K562 (cell line): ENCODE measurements at regions of chr17 and their contacts with region 1.

Region 1: DNA sequence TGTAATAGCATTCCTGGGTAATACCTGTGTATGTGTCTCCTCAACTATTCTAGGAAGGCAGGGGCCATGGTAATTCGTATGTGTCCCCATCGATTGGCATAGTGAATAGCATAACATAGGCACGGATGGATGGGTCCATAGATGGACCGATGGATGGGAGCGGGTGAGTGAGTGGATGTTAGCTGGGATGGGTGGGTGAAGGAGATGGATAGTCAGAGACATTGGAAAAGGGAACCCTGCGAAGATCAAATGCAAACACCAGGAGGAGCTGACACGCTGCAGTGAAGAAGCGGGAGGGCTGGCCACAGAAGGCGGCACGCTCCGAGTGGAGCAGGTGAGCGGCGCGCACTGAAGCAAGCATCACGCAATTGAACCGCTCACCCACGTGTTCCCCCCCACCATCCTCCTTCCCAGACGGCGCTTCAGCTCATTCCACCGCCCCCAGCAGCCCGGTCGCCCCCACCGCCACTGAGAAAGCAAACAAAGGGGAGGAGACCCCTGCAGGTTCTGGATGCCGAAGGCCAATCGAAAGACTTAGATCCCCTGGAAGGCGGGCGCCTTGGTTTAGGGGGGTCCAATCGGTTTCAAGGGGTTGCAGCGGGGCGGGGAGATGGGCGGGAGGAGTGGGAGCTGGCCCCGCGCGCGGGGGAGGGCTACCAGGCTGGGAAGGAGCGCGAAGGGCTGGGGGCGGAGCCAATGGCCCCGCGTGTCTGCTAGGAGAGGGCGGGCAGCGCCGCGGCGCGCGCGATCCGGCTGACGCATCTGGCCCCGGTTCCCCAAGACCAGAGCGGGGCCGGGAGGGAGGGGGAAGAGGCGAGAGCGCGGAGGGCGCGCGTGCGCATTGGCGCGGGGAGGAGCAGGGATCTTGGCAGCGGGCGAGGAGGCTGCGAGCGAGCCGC is at the start of gene ARRB2:
- DNase-seq: peak; percentile 90 to 97 (median 94)
- ATAC-seq: peak; percentile 94
- H3K4me3 ChIP-seq: peak within 1 kb of the TSS; percentile 56
- H3K27ac ChIP-seq: peak within 1 kb of the TSS; percentile 50; the same call in 2 of the 3 replicates
- H3K4me1 ChIP-seq: peaks cover 4 to 22% of the 10 kb centered on the region in 2 experiments; a peak in 4 of 5 replicates
- H3K27me3 ChIP-seq: no peaks in the 10 kb centered on the region
- CTCF ChIP-seq: peak; percentile 68 to 84 (median 81)
- EP300 ChIP-seq: 0 out of 2 replicates have a peak, but pooled peaks have one; percentile 4
- POLR2A ChIP-seq: no peak
- RAD21 ChIP-seq: peak; percentile 80 to 86
- polyA plus RNA-seq, gene ARRB2: 0.79 to 0.80 TPM

Region 2: DNA sequence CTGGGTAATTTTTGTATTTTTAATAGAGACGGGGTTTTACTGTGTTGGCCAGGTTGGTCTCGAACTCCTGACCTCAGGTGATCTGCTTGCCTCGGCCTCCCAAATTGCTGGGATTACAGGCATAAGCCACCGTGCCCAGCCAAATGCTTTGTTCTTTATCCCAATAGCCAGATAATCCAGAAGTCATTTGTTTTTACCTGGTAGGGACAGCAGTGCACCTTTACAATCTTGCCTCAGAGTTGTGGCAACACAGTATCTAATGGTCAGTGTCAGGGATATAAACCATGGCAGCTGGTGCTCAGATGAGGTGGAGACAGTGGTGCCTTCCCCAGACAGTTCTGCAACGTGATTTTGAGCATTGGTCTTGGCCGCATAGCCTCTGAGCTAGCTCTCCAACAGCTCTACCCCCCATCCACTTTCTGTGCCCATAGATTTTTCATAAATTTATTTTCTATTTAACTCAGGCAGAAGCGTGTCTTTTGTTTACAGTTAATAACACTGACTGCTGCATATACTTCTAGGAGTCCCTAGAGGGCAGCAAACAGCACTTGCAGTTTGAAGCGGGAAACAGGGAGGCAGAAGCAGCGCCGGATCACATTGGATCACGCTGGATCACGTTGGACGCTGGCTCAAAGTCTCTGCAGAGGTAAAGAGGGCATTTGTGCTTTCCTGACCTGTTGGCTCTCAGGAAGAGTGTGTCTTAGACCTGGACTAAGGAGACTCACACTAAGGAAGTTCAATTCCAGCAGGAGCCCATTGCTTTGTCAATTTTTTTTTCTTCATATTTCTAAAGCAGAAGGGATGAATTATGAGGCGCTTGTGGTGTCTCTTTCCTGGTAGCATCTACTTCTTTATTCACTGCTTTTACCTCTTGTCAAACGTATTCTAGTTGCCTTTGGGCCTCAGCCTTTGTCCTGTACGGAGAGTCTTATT is 144.6 kb before region 1 on chr17:
- CTCF ChIA-PET with region 1: no interaction called
- POLR2A ChIA-PET with region 1: no interaction called
- in situ Hi-C with region 1: no loop called
- intact Hi-C with region 1: loop called (anchors 10 kb)
- DNase-seq: peak; percentile 42 to 80 (median 52)
- ATAC-seq: peak; percentile 89
- H3K4me3 ChIP-seq: no peak overlapping the region
- H3K27ac ChIP-seq: no peak overlapping the region
- H3K4me1 ChIP-seq: peaks cover 0 to 2% of the 10 kb centered on the region in 2 experiments; a peak in 2 of 5 replicates
- H3K27me3 ChIP-seq: peaks cover 0 to 4% of the 10 kb centered on the region in 2 experiments; a peak in 2 of 5 replicates
- CTCF ChIP-seq: peak; percentile 79 to 81 (median 79)
- EP300 ChIP-seq: no peak
- POLR2A ChIP-seq: no peak
- RAD21 ChIP-seq: peak in 1 of 2 experiments; percentile 34; a peak in 2 of 4 replicates

Region 3: GRCh38 chr17:4690745-4691144 is 19.3 kb before region 1 on chr17:
- CTCF ChIA-PET with region 1: no interaction called
- POLR2A ChIA-PET with region 1: no interaction called
- in situ Hi-C with region 1: no loop called
- intact Hi-C with region 1: no loop called
- DNase-seq: no peak
- ATAC-seq: no peak
- H3K4me3 ChIP-seq: no peak overlapping the region
- H3K27ac ChIP-seq: no peak overlapping the region
- H3K4me1 ChIP-seq: no peaks in the 10 kb centered on the region
- H3K27me3 ChIP-seq: no peaks in the 10 kb centered on the region
- CTCF ChIP-seq: no peak
- EP300 ChIP-seq: no peak
- POLR2A ChIP-seq: no peak
- RAD21 ChIP-seq: no peak

Region 4: GRCh38 chr17:4733073-4733531 is 23.1 kb after region 1 on chr17:
- CTCF ChIA-PET with region 1: interaction called, 12 read pairs
- POLR2A ChIA-PET with region 1: no interaction called
- in situ Hi-C with region 1: no loop called
- intact Hi-C with region 1: loop called (anchors 2 kb)
- DNase-seq: no peak
- ATAC-seq: no peak
- H3K4me3 ChIP-seq: no peak overlapping the region
- H3K27ac ChIP-seq: no peak overlapping the region
- H3K4me1 ChIP-seq: peaks cover 4 to 14% of the 10 kb centered on the region in 2 experiments; a peak in 3 of 5 replicates
- H3K27me3 ChIP-seq: no peaks in the 10 kb centered on the region; a peak in 1 of 5 replicates
- CTCF ChIP-seq: 0 out of 6 replicates have a peak, but pooled peaks of 1 of the 3 experiments have one; percentile 7
- EP300 ChIP-seq: no peak
- POLR2A ChIP-seq: no peak
- RAD21 ChIP-seq: no peak

Region 5: GRCh38 chr17:4789901-4790704 is 80.1 kb after region 1 on chr17:
- CTCF ChIA-PET with region 1: interaction called, 13 read pairs
- POLR2A ChIA-PET with region 1: interaction called, 4 read pairs
- in situ Hi-C with region 1: no loop called
- intact Hi-C with region 1: loop called (anchors 2 kb)
- DNase-seq: peak; percentile 85 to 91 (median 88)
- ATAC-seq: peak; percentile 98
- H3K4me3 ChIP-seq: peak overlapping the region; percentile 60
- H3K27ac ChIP-seq: peak overlapping the region; percentile 82
- H3K4me1 ChIP-seq: peaks cover 0 to 31% of the 10 kb centered on the region in 2 experiments; a peak in 2 of 5 replicates
- H3K27me3 ChIP-seq: peaks cover 3 to 11% of the 10 kb centered on the region in 2 experiments; a peak in 3 of 5 replicates
- CTCF ChIP-seq: peak; percentile 70 to 98 (median 86)
- EP300 ChIP-seq: no peak
- POLR2A ChIP-seq: peak; percentile 69; the same call in 1 of the 2 replicates
- RAD21 ChIP-seq: peak; percentile 54 to 64

Region 6: GRCh38 chr17:4881761-4882555 is 171.9 kb after region 1 on chr17:
- CTCF ChIA-PET with region 1: interaction called, 7 read pairs
- POLR2A ChIA-PET with region 1: no interaction called
- in situ Hi-C with region 1: loop called (anchors 5 kb)
- intact Hi-C with region 1: no loop called
- DNase-seq: peak; percentile 50 to 69 (median 55)
- ATAC-seq: peak; percentile 97
- H3K4me3 ChIP-seq: no peak overlapping the region
- H3K27ac ChIP-seq: no peak overlapping the region
- H3K4me1 ChIP-seq: no peaks in the 10 kb centered on the region
- H3K27me3 ChIP-seq: no peaks in the 10 kb centered on the region
- CTCF ChIP-seq: peak; percentile 74 to 83 (median 80)
- EP300 ChIP-seq: no peak
- POLR2A ChIP-seq: no peak
- RAD21 ChIP-seq: peak; percentile 59 to 83

Region 7: GRCh38 chr17:4891411-4892342 is 181.6 kb after region 1 on chr17:
- CTCF ChIA-PET with region 1: interaction called, 10 read pairs
- POLR2A ChIA-PET with region 1: no interaction called
- in situ Hi-C with region 1: no loop called
- intact Hi-C with region 1: loop called (anchors 1 kb)
- DNase-seq: no peak
- ATAC-seq: no peak
- H3K4me3 ChIP-seq: no peak overlapping the region
- H3K27ac ChIP-seq: no peak overlapping the region
- H3K4me1 ChIP-seq: peaks cover 0 to 14% of the 10 kb centered on the region in 2 experiments; a peak in 2 of 5 replicates
- H3K27me3 ChIP-seq: no peaks in the 10 kb centered on the region
- CTCF ChIP-seq: no peak
- EP300 ChIP-seq: no peak
- POLR2A ChIP-seq: no peak
- RAD21 ChIP-seq: no peak